PC-9 (cell line): ENCODE measurements at regions of chrX and their contacts with region 1.

Region 1: GRCh38 chrX:153708415-153708814 is 15.8 kb downstream of the BCAP31 start:
- DNase-seq: peak; percentile 90 to 92
- H3K4me3 ChIP-seq: no peak overlapping the region
- H3K27ac ChIP-seq: peak overlapping the region; percentile 74
- H3K4me1 ChIP-seq: peaks cover 17% of the 10 kb centered on the region
- H3K27me3 ChIP-seq: no peaks in the 10 kb centered on the region
- CTCF ChIP-seq: peak; percentile 78

Region 2: GRCh38 chrX:153554519-153555167 is 153.8 kb before region 1 on chrX:
- CTCF ChIA-PET with region 1: interaction called, 3 read pairs
- POLR2A ChIA-PET with region 1: no interaction called
- intact Hi-C with region 1: loop called (anchors 2 kb)
- DNase-seq: peak in 1 of 2 experiments; percentile 76
- H3K4me3 ChIP-seq: no peak overlapping the region
- H3K27ac ChIP-seq: no peak overlapping the region
- H3K4me1 ChIP-seq: no peaks in the 10 kb centered on the region
- H3K27me3 ChIP-seq: peaks cover 70% of the 10 kb centered on the region
- CTCF ChIP-seq: peak; percentile 74

Region 3: DNA sequence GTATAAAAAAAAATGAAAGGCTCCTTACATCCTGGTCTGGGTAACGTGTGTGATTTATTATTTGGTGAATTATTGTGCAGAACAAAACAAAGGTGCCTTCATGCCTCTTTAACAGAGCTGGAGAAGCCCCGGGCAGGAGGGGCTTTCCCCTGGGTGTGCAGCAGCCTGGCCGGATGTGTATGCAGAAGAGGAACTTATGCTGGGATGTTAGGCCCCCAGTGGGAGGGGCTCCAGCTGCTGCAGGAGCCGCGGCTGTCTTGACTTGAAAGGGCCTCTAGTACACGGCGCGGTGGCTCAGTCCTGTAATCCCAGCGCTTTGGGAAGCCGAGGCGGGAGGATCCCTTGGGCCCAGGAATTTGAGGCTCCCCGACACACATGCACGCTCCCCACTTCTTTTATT is 125.5 kb before region 1 on chrX:
- CTCF ChIA-PET with region 1: no interaction called
- POLR2A ChIA-PET with region 1: no interaction called
- intact Hi-C with region 1: no loop called
- DNase-seq: no peak
- H3K4me3 ChIP-seq: no peak overlapping the region
- H3K27ac ChIP-seq: no peak overlapping the region
- H3K4me1 ChIP-seq: no peaks in the 10 kb centered on the region
- H3K27me3 ChIP-seq: 0 out of 2 replicates have a peak, but pooled peaks cover 2% of the 10 kb centered on the region
- CTCF ChIP-seq: no peak

Region 4: GRCh38 chrX:153609917-153610428 is 98.4 kb before region 1 on chrX:
- CTCF ChIA-PET with region 1: no interaction called
- POLR2A ChIA-PET with region 1: no interaction called
- intact Hi-C with region 1: loop called (anchors 5 kb)
- DNase-seq: peak in 1 of 2 experiments; percentile 74
- H3K4me3 ChIP-seq: no peak overlapping the region
- H3K27ac ChIP-seq: no peak overlapping the region
- H3K4me1 ChIP-seq: no peaks in the 10 kb centered on the region
- H3K27me3 ChIP-seq: peaks cover 71% of the 10 kb centered on the region
- CTCF ChIP-seq: peak; percentile 64

Region 5: GRCh38 chrX:153724252-153725040 is 16.0 kb after region 1 on chrX and contains the starts of genes ABCD1 and BCAP31:
- CTCF ChIA-PET with region 1: no interaction called
- POLR2A ChIA-PET with region 1: interaction called, 3 read pairs
- intact Hi-C with region 1: loop called (anchors 1 kb)
- DNase-seq: peak; percentile 76 to 97
- H3K4me3 ChIP-seq: peak within 1 kb of the TSS; percentile 85
- H3K27ac ChIP-seq: peak within 1 kb of the TSS; percentile 91
- H3K4me1 ChIP-seq: peaks cover 34% of the 10 kb centered on the region
- H3K27me3 ChIP-seq: no peaks in the 10 kb centered on the region
- CTCF ChIP-seq: no peak
- total RNA-seq, gene ABCD1: 40.0 and 44.9 TPM in 2 replicates
- total RNA-seq, gene BCAP31: 522 and 541 TPM in 2 replicates

Region 6: GRCh38 chrX:153862369-153863250 is 154.2 kb after region 1 on chrX:
- CTCF ChIA-PET with region 1: no interaction called
- POLR2A ChIA-PET with region 1: no interaction called
- intact Hi-C with region 1: no loop called
- DNase-seq: no peak
- H3K4me3 ChIP-seq: no peak overlapping the region
- H3K27ac ChIP-seq: no peak overlapping the region
- H3K4me1 ChIP-seq: no peaks in the 10 kb centered on the region
- H3K27me3 ChIP-seq: peaks cover 11% of the 10 kb centered on the region; the same call in 1 of the 2 replicates
- CTCF ChIP-seq: no peak

Region 7: DNA sequence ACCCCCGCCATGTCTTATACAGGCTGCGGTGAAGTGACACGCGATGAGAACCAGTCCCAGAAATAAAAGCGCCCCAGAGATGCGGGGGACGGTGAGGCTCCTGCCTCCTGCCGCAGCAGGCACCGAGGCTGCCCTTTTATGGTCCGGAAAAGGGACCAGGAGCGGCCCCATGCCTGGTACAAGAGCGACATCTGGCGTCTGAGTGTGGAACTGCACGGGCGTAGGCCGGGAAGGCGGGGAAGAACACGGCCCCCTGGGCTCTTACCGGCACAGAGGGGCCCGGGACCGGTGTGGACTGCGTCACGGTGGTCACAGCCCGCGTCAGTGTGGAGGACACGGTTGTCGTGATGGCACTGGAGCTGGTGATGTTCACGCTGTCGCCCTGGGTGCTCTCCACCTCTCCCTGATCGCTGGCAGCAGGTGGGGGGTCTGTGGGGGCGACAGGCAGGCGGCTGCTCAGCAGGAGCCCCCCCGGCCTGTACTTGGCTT is 245.0 kb after region 1 on chrX:
- CTCF ChIA-PET with region 1: no interaction called
- POLR2A ChIA-PET with region 1: no interaction called
- intact Hi-C with region 1: loop called (anchors 5 kb)
- DNase-seq: peak in 1 of 2 experiments; percentile 70
- H3K4me3 ChIP-seq: no peak overlapping the region
- H3K27ac ChIP-seq: no peak overlapping the region
- H3K4me1 ChIP-seq: no peaks in the 10 kb centered on the region
- H3K27me3 ChIP-seq: no peaks in the 10 kb centered on the region
- CTCF ChIP-seq: peak; percentile 95